ENCODE measurements at regions of chr7 and their contacts with region 1.

Region 1: DNA sequence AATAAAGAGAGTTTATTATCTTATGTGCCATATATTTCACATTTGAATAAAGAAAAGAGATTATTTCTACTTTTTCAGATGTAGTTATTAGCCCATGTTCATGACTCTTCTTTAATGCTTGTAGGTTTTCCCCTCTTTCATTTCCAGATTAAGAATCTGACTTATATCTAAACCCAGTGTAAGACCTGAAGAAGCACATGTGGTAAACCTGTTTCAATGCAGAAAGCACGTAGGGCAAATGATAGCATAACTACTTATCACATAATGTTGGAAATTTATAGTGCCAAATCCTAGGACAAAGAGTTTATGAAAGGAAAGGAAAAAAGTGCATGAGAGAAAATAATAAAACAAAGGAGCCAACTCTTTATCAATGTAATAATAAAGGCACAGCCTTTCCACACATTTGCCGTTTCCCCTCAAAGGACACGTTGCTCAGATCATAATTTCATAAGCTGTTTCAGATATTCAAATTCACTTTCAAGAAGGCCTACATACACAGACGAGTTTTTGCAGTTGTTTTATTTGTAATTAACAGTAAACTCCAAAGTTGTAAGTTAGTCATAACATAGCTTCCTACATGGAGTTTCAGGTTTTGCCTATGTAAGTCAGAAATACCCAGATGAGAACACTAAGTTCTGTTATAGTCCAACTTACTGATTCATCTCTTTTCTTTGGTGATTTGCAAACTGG is 88.8 kb upstream of the MDFIC start:
- DNase-seq: peak; percentile 12
- H3K4me3 Mint-ChIP-seq: no peak overlapping the region
- H3K27ac Mint-ChIP-seq: peak overlapping the region; percentile 93
- H3K4me1 Mint-ChIP-seq: peaks cover 37% of the 10 kb centered on the region
- H3K27me3 Mint-ChIP-seq: peaks cover 14% of the 10 kb centered on the region

Region 2: DNA sequence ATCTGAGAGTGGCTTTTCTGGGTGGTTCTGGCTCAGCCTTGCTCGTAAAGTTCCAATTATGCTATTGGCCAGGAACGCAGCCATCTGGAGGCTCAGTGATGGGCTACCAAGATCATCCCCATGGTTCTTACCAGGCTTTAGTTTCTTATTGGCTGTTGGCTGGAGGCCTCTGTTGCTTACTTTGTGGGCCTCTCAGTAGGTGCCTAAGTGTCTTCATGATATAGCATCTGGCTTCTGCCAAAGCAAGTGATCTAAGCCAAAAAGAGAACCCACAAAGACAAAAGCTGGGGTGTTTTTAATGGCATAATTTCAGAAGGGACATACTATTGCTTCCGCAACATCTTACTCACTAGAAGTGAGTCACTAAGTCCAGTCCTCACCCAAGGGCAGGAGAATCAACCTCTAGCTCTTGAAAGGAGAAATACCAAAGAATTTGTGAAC is 43.2 kb before region 1 on chr7:
- CTCF ChIA-PET with region 1: no interaction called
- intact Hi-C with region 1: loop called (anchors 1 kb)
- DNase-seq: no peak
- H3K4me3 Mint-ChIP-seq: no peak overlapping the region
- H3K27ac Mint-ChIP-seq: peak overlapping the region; percentile 37
- H3K4me1 Mint-ChIP-seq: peaks cover 62% of the 10 kb centered on the region
- H3K27me3 Mint-ChIP-seq: peaks cover 13% of the 10 kb centered on the region

Region 3: GRCh38 chr7:114819616-114820362 is 13.3 kb before region 1 on chr7:
- CTCF ChIA-PET with region 1: interaction called, 3 read pairs
- intact Hi-C with region 1: loop called (anchors 1 kb)
- DNase-seq: no peak
- H3K4me3 Mint-ChIP-seq: no peak overlapping the region
- H3K27ac Mint-ChIP-seq: no peak overlapping the region
- H3K4me1 Mint-ChIP-seq: peaks cover 27% of the 10 kb centered on the region
- H3K27me3 Mint-ChIP-seq: peaks cover 7% of the 10 kb centered on the region

Region 4: DNA sequence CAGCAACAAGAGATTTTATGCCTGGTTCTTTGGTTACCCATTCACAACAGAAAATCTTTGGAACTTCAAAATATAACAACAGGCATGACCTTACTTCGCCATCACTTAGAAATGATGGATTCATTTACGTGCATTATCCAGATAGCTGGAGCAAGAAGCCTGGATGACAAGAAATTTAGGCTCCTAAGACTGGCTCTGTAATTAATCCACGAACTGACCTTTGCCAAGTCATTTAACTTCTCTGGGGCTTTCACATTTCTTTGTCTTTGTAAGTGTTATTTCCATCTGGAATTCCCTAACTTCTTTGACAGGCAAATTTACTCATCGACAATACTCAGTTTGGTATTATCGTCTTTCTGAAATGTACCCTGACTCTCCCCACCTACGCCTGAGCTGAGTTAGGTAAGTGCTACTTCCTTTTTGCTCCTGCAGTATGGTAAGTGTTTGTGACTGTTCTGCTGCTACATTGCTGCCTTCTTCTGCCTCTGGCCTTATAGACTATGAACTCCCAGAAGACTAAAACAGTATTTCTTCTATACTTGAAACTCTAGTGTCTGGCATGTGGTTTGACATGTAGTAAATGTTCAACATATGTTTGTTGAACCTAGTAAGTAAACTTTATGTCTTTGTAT is 83.3 kb after region 1 on chr7:
- CTCF ChIA-PET with region 1: interaction called, 5 read pairs
- intact Hi-C with region 1: loop called (anchors 1 kb)
- DNase-seq: peak; percentile 81
- H3K4me3 Mint-ChIP-seq: peak overlapping the region; percentile 46
- H3K27ac Mint-ChIP-seq: peak overlapping the region; percentile 94
- H3K4me1 Mint-ChIP-seq: peaks cover 66% of the 10 kb centered on the region
- H3K27me3 Mint-ChIP-seq: no peaks in the 10 kb centered on the region

Region 5: GRCh38 chr7:115230882-115231571 is 398.0 kb after region 1 on chr7:
- CTCF ChIA-PET with region 1: no interaction called
- intact Hi-C with region 1: loop called (anchors 1 kb)
- DNase-seq: no peak
- H3K4me3 Mint-ChIP-seq: no peak overlapping the region
- H3K27ac Mint-ChIP-seq: peak overlapping the region; percentile 19
- H3K4me1 Mint-ChIP-seq: peaks cover 18% of the 10 kb centered on the region
- H3K27me3 Mint-ChIP-seq: peaks cover 6% of the 10 kb centered on the region